HCT116 (cell line): ENCODE measurements at regions of chr21 and their contacts with region 1.

Region 1: GRCh38 chr21:31604591-31605190 is 54.8 kb upstream of the SOD1 start:
- DNase-seq: peak; percentile 45
- ATAC-seq: peak; percentile 92
- H3K4me3 ChIP-seq: no peak overlapping the region
- H3K27ac ChIP-seq: no peak overlapping the region
- H3K4me1 ChIP-seq: peaks cover 8 to 10% of the 10 kb centered on the region in 2 experiments; a peak in 3 of 4 replicates
- H3K27me3 ChIP-seq: no peaks in the 10 kb centered on the region
- CTCF ChIP-seq: peak; percentile 74 to 94 (median 74)
- POLR2A ChIP-seq: no peak
- RAD21 ChIP-seq: peak; percentile 89

Region 2: DNA sequence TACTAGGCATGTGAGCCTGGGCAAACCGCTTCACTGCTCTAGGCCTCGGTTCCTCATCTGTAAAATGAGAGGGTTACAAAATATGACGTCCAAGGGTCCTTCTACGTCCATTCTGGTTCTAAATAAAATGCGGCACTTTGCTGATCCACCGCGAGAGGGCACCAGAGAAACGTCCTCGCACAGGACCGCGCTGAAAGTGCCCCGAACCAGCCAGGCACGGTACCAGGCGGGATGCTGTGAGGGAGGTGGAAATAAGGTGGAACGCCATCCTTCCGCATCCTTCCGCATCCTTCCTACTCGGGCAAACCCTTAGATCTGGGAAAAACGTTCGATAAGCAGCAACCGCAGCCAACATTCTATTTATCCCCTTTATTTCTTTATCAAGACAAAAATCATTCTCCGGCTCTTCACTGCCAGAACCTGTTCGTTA is 506.1 kb before region 1 on chr21:
- CTCF ChIA-PET with region 1: interaction called, 7 read pairs
- POLR2A ChIA-PET with region 1: no interaction called
- RAD21 ChIA-PET with region 1: interaction called in 1 of 2 experiments, 3 read pairs
- intact Hi-C with region 1: loop called (anchors 1 kb)
- DNase-seq: peak; percentile 51
- ATAC-seq: peak; percentile 97
- H3K4me3 ChIP-seq: no peak overlapping the region
- H3K27ac ChIP-seq: no peak overlapping the region
- H3K4me1 ChIP-seq: no peaks in the 10 kb centered on the region; a peak in 1 of 4 replicates
- H3K27me3 ChIP-seq: 0 out of 2 replicates have a peak, but pooled peaks cover 3% of the 10 kb centered on the region
- CTCF ChIP-seq: peak; percentile 65 to 94 (median 92)
- POLR2A ChIP-seq: no peak
- RAD21 ChIP-seq: peak; percentile 79

Region 3: DNA sequence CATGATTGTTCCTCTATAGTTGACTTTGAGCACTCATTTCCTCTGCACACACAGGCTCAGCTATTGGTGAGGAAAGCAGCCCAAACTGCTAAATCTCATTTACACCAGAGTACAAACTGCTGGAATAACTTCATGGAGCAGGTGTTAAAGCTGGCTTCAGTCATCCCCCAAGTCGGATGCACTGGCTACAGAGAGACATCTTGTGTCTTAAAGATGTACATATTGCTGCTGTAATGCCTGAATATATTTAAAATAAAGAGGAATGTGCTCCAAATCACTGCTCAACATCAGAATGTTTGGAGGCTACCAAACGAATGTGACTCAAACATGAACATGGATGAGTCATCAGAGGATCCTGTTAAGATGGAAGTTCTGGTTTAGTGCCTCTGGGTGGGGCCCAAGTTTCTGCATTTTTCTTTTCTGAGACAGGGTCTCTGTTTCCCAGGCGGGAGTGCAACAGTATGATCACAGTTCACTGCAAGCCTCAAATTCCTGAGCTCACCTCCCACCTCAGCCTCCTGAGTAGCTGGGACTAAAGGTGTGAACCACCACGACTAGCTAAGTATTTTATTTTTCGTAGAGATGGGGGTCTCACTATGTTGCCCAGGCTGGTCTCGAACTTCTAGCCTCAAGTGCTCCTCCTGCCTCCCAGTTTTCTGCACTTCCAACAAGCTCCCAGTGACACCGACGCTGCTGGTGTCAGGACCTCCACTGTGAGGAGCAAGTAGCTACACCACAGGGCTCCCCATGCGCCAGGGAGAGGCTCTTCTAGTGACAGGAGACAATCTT is 487.4 kb before region 1 on chr21:
- CTCF ChIA-PET with region 1: interaction called, 3 read pairs
- POLR2A ChIA-PET with region 1: no interaction called
- RAD21 ChIA-PET with region 1: no interaction called
- intact Hi-C with region 1: loop called (anchors 5 kb)
- DNase-seq: peak; percentile 50
- ATAC-seq: peak; percentile 79
- H3K4me3 ChIP-seq: peak overlapping the region in 1 of 2 experiments; percentile 24; a peak in 2 of 4 replicates
- H3K27ac ChIP-seq: peak overlapping the region; percentile 24; the same call in 1 of the 2 replicates
- H3K4me1 ChIP-seq: peaks cover 12 to 19% of the 10 kb centered on the region in 2 experiments
- H3K27me3 ChIP-seq: no peaks in the 10 kb centered on the region
- CTCF ChIP-seq: peak in 1 of 3 experiments; percentile 17; a peak in 2 of 6 replicates
- POLR2A ChIP-seq: no peak
- RAD21 ChIP-seq: no peak; the same call in 1 of the 2 replicates

Region 4: DNA sequence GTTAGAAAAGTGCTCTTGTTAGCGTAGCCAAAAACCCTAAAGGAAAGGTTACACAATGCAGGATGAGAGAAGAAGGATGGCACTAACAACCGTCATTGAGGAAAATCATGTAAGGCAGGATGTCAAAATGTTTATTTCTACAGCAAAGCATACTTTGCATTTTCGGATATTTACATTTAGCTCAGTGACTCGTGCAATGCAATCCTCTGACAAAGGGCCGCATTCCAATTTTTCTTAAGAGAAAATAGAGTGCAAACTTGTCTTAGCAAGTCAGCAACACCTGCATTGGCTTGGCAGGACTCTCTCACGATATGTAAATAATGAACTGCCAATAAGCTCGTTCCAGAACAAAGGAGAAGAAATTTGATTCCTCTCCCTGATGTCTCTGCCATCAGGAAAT is 293.9 kb before region 1 on chr21:
- CTCF ChIA-PET with region 1: no interaction called
- POLR2A ChIA-PET with region 1: no interaction called
- RAD21 ChIA-PET with region 1: no interaction called
- intact Hi-C with region 1: no loop called
- DNase-seq: no peak
- ATAC-seq: no peak
- H3K4me3 ChIP-seq: no peak overlapping the region
- H3K27ac ChIP-seq: no peak overlapping the region
- H3K4me1 ChIP-seq: peaks cover 32 to 49% of the 10 kb centered on the region in 2 experiments
- H3K27me3 ChIP-seq: no peaks in the 10 kb centered on the region
- CTCF ChIP-seq: no peak
- POLR2A ChIP-seq: no peak
- RAD21 ChIP-seq: no peak